ENCODE measurements at regions of chr20 and their contacts with region 1.

Region 1: GRCh38 chr20:54649511-54649962 is 174.1 kb downstream of the DOK5 start:
- DNase-seq: no peak
- ATAC-seq: peak; percentile 86
- H3K4me3 ChIP-seq: no peak overlapping the region
- H3K27ac ChIP-seq: no peak overlapping the region
- H3K4me1 ChIP-seq: no peaks in the 10 kb centered on the region
- H3K27me3 ChIP-seq: no peaks in the 10 kb centered on the region
- CTCF ChIP-seq: peak; percentile 74 to 80 (median 76)
- EP300 ChIP-seq: no peak
- POLR2A ChIP-seq: no peak
- RAD21 ChIP-seq: peak; percentile 73

Region 2: GRCh38 chr20:53547664-53548239 is 1101.8 kb before region 1 on chr20:
- CTCF ChIA-PET with region 1: no interaction called
- POLR2A ChIA-PET with region 1: no interaction called
- RAD21 ChIA-PET with region 1: no interaction called
- SMC1A ChIA-PET with region 1: no interaction called
- in situ Hi-C with region 1: loop called (anchors 25 kb)
- intact Hi-C with region 1: loop called (anchors 10 kb)
- DNase-seq: peak; percentile 21
- ATAC-seq: peak; percentile 70
- H3K4me3 ChIP-seq: no peak overlapping the region
- H3K27ac ChIP-seq: no peak overlapping the region
- H3K4me1 ChIP-seq: no peaks in the 10 kb centered on the region
- H3K27me3 ChIP-seq: no peaks in the 10 kb centered on the region
- CTCF ChIP-seq: peak; percentile 65 to 78 (median 65)
- EP300 ChIP-seq: no peak
- POLR2A ChIP-seq: no peak
- RAD21 ChIP-seq: peak; percentile 92

Region 3: DNA sequence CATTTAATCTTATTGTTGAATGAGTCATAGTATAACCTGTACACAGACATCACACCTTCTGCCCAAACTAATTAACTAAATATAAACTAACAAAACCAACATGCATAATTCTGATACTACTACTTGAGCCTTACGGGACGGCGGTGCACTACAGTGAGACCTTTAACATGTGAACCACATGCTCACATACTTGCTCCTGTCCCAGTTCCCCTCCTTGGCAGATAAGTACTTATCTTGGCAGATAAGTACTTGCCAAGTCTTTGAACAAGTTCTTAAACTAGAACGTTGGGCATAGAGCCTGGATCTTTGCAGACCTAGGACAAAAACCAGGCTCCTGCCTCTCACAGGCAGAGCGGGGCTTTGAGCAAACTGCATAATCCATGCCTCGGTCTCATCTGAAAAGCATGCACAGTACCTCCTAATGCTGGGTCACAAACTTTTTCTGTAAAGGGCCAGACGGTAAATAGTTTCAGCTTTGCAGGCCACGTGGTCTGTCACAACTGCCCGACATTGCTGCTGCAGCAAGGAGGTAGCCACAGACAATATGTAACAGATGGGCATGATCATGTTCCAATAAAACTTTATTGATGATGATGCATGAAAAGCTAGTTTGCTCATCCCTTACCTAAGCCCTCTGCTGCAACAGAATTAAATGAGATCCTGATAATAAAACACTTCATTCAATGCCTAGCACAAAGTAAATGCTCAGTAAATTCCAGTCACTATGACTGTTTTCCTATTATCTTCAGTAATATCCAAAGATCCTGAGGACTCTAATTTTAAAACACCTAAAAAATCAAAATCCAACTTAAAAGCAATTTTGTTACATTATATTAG is 1078.8 kb before region 1 on chr20:
- CTCF ChIA-PET with region 1: no interaction called
- POLR2A ChIA-PET with region 1: no interaction called
- RAD21 ChIA-PET with region 1: no interaction called
- SMC1A ChIA-PET with region 1: no interaction called
- in situ Hi-C with region 1: loop called (anchors 25 kb)
- intact Hi-C with region 1: no loop called
- DNase-seq: no peak
- ATAC-seq: peak; percentile 64
- H3K4me3 ChIP-seq: no peak overlapping the region
- H3K27ac ChIP-seq: no peak overlapping the region
- H3K4me1 ChIP-seq: peaks cover 19% of the 10 kb centered on the region
- H3K27me3 ChIP-seq: no peaks in the 10 kb centered on the region
- CTCF ChIP-seq: no peak
- EP300 ChIP-seq: no peak
- POLR2A ChIP-seq: no peak
- RAD21 ChIP-seq: no peak

Region 4: DNA sequence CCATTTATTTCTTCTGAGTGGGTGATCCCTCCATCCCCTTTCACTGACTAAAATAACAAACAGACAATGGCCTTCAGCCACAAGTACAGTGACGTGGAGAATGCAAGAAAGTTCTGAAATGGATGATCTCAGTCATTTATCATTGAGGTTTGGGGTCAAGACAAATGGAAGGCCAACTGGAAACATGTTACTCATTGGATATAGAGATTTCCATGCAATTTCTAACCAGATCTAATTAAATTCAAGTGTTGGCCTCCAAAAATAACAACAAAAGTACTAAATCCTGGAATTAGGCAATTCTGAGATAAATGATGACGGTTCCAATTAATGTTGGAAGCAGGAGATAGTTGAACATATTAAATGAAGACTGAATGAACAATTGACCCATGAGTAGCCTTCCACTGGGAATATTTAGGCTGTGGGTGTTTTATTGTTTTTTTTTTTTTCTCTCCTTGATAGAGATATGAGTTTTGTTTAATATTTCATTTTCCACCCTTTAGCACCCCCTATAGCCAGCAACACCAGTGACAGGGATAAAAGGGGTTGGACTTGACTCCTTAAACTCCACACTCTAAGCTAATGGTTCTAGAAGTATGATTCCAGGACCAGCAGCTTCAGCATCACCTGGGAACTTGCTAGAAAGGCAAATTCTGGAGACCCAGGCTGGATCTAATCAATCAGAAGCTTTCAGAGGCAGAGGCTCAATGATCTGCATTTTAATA is 691.9 kb before region 1 on chr20:
- CTCF ChIA-PET with region 1: no interaction called
- POLR2A ChIA-PET with region 1: no interaction called
- RAD21 ChIA-PET with region 1: no interaction called
- SMC1A ChIA-PET with region 1: no interaction called
- in situ Hi-C with region 1: loop called (anchors 25 kb)
- intact Hi-C with region 1: no loop called
- DNase-seq: no peak
- ATAC-seq: 0 out of 3 replicates have a peak, but pooled peaks have one; percentile 31
- H3K4me3 ChIP-seq: no peak overlapping the region
- H3K27ac ChIP-seq: no peak overlapping the region
- H3K4me1 ChIP-seq: no peaks in the 10 kb centered on the region
- H3K27me3 ChIP-seq: no peaks in the 10 kb centered on the region; a peak in 1 of 4 replicates
- CTCF ChIP-seq: peak in 2 of 3 experiments; percentile 4 to 20; a peak in 1 of 6 replicates
- EP300 ChIP-seq: no peak
- POLR2A ChIP-seq: no peak
- RAD21 ChIP-seq: peak; percentile 23; the same call in 1 of the 2 replicates

Region 5: DNA sequence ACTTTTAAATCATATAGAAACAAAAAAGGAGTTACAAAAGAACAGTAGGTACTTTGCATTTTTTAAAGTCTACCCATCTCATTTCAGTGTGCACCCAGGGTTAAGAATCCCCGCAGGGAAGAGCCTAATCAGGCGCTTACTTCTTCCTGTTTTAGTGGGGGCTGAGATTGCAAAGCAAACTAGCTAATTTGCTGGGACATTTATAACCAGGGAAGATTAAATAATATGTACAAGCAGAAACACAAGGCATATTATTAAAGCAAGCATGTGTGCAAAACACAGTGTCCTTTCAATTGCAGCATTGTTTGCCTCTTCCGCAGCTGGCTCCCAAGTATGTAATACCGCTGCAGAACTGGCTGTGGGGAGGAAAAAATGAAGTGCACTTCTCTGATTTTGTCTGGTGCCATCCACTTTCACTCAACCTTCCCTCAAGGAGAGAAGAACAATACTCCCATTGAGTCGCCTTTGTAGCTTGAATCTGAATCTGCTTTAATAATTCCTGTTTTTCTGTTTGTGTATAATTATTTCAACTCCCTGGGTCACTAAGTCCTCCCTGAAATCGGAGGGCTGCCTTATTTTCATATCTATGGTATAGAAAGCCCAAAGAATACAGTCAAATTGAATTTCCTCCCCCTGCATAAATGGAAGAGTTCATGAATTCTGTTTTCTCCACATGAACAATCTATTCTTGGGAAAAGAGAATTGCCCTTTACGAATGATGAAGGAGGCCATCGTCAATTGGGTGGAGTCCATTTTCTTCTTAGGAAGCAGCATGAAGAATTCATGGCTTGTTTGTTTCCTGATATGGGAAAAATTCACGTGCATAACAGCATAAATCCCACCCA is 555.9 kb before region 1 on chr20:
- CTCF ChIA-PET with region 1: interaction called, 6 read pairs
- POLR2A ChIA-PET with region 1: no interaction called
- RAD21 ChIA-PET with region 1: no interaction called
- SMC1A ChIA-PET with region 1: interaction called, 6 read pairs
- in situ Hi-C with region 1: no loop called
- intact Hi-C with region 1: loop called (anchors 2 kb)
- DNase-seq: no peak
- ATAC-seq: no peak
- H3K4me3 ChIP-seq: no peak overlapping the region
- H3K27ac ChIP-seq: no peak overlapping the region
- H3K4me1 ChIP-seq: peaks cover 8% of the 10 kb centered on the region
- H3K27me3 ChIP-seq: no peaks in the 10 kb centered on the region
- CTCF ChIP-seq: no peak
- EP300 ChIP-seq: no peak
- POLR2A ChIP-seq: no peak
- RAD21 ChIP-seq: no peak

Region 6: DNA sequence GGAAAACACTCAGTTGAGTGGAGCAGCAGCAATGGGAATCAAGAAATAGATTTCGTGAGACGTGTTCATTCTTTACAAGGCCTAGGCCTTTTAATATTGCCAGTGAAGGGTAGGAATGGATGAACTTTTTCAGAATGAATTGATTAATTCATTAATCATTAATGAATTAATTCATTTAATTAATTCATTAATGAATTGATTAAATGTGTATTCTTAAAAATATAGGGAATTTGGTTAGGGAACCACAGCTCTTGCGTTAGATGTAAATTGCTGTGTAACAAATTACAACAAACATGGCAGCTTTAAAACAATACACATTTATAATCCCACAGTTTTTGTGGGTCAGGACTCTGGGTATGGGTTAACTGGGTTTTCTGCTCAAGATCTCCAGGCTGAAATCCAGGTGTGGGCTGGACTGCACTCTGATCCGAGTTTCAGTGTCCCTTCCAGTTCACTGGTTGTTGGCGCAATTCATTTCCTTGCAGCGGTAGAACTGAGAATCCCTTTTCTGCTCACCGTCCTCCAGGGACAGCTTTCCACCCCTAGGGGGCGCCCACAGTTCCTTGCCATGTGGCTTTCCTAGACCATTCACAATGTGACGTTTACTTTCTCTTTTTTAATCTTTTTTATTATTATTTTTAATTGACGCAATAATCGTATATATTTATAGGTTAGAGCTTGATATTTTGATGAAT is 546.3 kb before region 1 on chr20:
- CTCF ChIA-PET with region 1: interaction called, 17 read pairs
- POLR2A ChIA-PET with region 1: no interaction called
- RAD21 ChIA-PET with region 1: interaction called, 5 read pairs
- SMC1A ChIA-PET with region 1: interaction called, 10 read pairs
- in situ Hi-C with region 1: loop called (anchors 5 kb)
- intact Hi-C with region 1: no loop called
- DNase-seq: no peak
- ATAC-seq: peak; percentile 97
- H3K4me3 ChIP-seq: no peak overlapping the region
- H3K27ac ChIP-seq: no peak overlapping the region
- H3K4me1 ChIP-seq: no peaks in the 10 kb centered on the region
- H3K27me3 ChIP-seq: no peaks in the 10 kb centered on the region
- CTCF ChIP-seq: peak; percentile 80 to 90 (median 90)
- EP300 ChIP-seq: no peak
- POLR2A ChIP-seq: no peak
- RAD21 ChIP-seq: peak; percentile 61

Region 7: GRCh38 chr20:54219751-54220426 is 429.6 kb before region 1 on chr20:
- CTCF ChIA-PET with region 1: interaction called, 15 read pairs
- POLR2A ChIA-PET with region 1: no interaction called
- RAD21 ChIA-PET with region 1: interaction called, 3 read pairs
- SMC1A ChIA-PET with region 1: interaction called, 5 read pairs
- in situ Hi-C with region 1: loop called (anchors 5 kb)
- intact Hi-C with region 1: loop called (anchors 1 kb)
- DNase-seq: no peak
- ATAC-seq: no peak
- H3K4me3 ChIP-seq: no peak overlapping the region
- H3K27ac ChIP-seq: no peak overlapping the region
- H3K4me1 ChIP-seq: no peaks in the 10 kb centered on the region
- H3K27me3 ChIP-seq: no peaks in the 10 kb centered on the region
- CTCF ChIP-seq: peak; percentile 25 to 44 (median 29); a peak in 4 of 6 replicates
- EP300 ChIP-seq: no peak
- POLR2A ChIP-seq: no peak
- RAD21 ChIP-seq: peak; percentile 50

Region 8: GRCh38 chr20:54485631-54486030 is 163.9 kb before region 1 on chr20:
- CTCF ChIA-PET with region 1: no interaction called
- POLR2A ChIA-PET with region 1: no interaction called
- RAD21 ChIA-PET with region 1: no interaction called
- SMC1A ChIA-PET with region 1: no interaction called
- in situ Hi-C with region 1: no loop called
- intact Hi-C with region 1: no loop called
- DNase-seq: no peak
- ATAC-seq: no peak
- H3K4me3 ChIP-seq: no peak overlapping the region
- H3K27ac ChIP-seq: no peak overlapping the region
- H3K4me1 ChIP-seq: no peaks in the 10 kb centered on the region
- H3K27me3 ChIP-seq: no peaks in the 10 kb centered on the region
- CTCF ChIP-seq: no peak
- EP300 ChIP-seq: no peak
- POLR2A ChIP-seq: no peak
- RAD21 ChIP-seq: no peak